T-cell (primary cell): ENCODE measurements at regions of chr6 and their contacts with region 1.

Region 1: GRCh38 chr6:38603966-38604365 is 35.8 kb downstream of the BTBD9 start:
- DNase-seq: no peak
- ATAC-seq: no peak
- H3K4me3 ChIP-seq: no peak overlapping the region
- H3K4me3 Mint-ChIP-seq: no peak overlapping the region
- H3K27ac ChIP-seq: no peak overlapping the region
- H3K27ac Mint-ChIP-seq: no peak overlapping the region
- H3K4me1 ChIP-seq: no peaks in the 10 kb centered on the region
- H3K4me1 Mint-ChIP-seq: peaks cover 17 to 28% (median 22%) of the 10 kb centered on the region in 3 donors
- H3K27me3 ChIP-seq: no peaks in the 10 kb centered on the region
- H3K27me3 Mint-ChIP-seq: no peaks in the 10 kb centered on the region

Region 2: GRCh38 chr6:39508515-39508914 is 904.5 kb after region 1 on chr6:
- CTCF ChIA-PET with region 1: interaction called in 1 of 2 experiments, 13 read pairs
- POLR2A ChIA-PET with region 1: no interaction called
- DNase-seq: no peak
- ATAC-seq: no peak
- H3K4me3 ChIP-seq: no peak overlapping the region
- H3K4me3 Mint-ChIP-seq: no peak overlapping the region
- H3K27ac ChIP-seq: no peak overlapping the region
- H3K27ac Mint-ChIP-seq: no peak overlapping the region
- H3K4me1 ChIP-seq: no peaks in the 10 kb centered on the region
- H3K4me1 Mint-ChIP-seq: no peaks in the 10 kb centered on the region
- H3K27me3 ChIP-seq: peaks cover 0 to 7% of the 10 kb centered on the region in 2 experiments
- H3K27me3 Mint-ChIP-seq: peaks cover 13 to 19% of the 10 kb centered on the region in 2 donors